ENCODE measurements at regions of chr22 and their contacts with region 1.

Region 1: DNA sequence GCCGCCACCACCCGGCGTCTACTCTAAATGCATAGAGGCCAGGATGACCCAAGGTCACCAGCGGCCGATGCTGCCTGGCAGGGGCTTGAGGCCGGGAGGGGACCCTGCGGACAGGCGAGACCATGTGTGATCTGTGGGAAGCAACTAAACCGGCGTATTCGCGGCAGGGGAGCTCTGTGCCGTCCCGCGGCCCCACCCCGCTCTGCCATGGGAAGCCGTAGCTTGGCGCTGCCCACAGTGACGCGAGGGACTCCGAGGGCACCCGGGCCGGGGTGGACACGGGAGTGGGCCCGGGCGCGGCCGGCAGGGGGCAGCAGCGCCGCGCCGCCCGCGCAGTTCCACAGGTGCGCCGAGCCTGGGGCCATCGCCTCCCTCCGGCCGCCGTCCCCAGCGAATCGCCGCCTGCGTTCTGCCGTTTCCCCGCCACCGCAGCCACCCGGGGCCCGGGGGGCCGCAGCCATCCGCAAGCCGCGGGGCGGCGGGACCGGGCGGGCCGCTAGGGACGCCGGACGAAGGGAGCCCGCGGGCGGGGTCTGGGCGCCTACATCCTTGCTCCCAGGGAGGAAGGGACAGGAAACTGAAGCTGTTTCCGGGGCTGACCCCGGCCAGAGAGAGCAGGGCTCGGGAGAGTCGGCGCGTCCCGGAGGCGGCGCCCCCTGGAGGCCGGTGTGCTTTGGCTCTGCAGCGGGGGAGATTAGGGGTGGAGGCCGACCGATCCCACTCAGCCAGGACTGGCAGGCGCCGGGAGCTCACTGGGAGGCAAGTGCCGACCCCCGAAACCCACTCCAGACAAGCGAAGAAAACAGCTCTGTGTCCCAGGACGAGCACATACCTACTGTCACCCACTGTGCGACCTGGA is 12.5 kb upstream of the HDHD5 start:
- DNase-seq: peak; percentile 96
- ATAC-seq: peak; percentile 94

Region 2: DNA sequence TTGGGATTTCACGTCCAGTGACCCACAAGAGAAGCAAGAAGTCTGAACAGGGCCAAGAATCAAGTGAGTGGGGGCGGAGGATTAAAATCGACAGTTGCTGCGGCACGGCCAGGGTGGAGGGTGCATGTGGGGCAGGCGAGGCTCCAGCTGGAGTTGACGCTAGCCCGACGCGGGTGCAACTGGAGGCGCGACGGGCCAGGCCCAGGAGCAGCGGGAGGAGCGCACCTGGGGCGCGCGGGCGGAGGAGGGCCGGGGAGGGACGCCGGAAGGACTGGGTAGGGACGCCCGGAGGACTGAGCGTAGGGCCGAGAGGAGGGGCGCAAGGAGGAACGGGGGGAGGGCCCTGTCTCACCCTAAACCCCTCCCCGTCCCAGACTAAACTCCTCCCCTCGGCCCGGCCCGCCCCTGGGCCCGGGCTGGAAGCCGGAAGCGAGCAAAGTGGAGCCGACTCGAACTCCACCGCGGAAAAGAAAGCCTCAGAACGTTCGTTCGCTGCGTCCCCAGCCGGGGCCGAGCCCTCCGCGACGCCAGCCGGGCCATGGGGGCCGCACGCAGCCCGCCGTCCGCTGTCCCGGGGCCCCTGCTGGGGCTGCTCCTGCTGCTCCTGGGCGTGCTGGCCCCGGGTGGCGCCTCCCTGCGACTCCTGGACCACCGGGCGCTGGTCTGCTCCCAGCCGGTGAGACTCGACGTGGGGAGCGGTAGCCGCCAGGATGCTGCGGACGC is 86.8 kb before region 1 on chr22 and contains the start of gene IL17RA:
- intact Hi-C with region 1: loop called (anchors 5 kb)
- DNase-seq: peak; percentile 95
- ATAC-seq: peak; percentile 99
- total RNA-seq, gene IL17RA: 10.9 TPM

Region 3: DNA sequence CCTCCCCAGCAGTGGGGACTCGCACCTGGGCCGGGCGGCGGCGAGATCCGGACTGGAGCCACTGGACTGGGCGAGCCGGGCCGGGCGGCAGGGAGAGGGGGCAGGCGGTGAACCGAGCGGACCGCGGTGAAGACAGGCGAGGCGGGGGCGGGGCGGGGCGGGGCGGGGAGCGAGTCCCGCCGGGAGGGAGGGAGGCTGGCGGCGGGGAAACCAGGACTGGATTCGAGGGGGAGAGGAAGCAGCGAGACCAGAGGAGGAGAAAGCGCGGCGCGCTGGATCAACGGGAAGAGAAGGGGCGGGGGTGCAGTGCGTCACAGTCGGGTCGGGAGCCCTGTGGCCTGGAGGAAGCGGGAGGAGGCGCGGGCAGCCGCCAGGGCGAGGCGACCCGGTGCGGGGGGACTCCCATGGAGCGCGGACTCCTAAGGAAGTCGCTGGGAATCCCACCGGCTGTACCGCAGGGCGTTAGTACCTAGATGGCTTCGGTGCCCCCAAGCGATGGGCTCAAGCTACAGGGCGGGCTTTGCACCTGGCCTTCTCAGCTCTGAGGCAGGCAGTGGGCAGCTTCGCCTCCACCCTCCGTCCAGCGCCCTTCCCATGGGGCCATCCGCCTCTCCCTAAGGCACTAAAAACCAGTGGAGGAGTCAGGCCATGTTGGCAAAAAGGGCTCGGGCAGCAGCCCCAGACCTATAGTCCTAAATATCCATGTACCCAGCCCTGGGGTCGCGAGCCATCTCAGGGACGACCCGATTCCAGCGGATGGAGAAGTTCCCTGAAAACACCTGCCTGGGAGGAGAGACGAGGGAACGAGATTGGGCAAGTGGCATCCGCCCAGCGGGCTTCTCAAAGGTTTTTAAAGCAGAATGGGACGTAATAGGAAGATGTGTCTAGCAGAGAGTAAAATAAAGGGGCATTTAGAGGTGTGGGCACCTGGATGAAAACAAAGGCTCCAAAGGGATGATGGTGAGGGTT is 50.0 kb before region 1 on chr22 and contains the start of gene TMEM121B:
- intact Hi-C with region 1: loop called (anchors 1 kb)
- DNase-seq: peak; percentile 91
- ATAC-seq: peak; percentile 79
- total RNA-seq, gene TMEM121B: 2.2 TPM

Region 4: DNA sequence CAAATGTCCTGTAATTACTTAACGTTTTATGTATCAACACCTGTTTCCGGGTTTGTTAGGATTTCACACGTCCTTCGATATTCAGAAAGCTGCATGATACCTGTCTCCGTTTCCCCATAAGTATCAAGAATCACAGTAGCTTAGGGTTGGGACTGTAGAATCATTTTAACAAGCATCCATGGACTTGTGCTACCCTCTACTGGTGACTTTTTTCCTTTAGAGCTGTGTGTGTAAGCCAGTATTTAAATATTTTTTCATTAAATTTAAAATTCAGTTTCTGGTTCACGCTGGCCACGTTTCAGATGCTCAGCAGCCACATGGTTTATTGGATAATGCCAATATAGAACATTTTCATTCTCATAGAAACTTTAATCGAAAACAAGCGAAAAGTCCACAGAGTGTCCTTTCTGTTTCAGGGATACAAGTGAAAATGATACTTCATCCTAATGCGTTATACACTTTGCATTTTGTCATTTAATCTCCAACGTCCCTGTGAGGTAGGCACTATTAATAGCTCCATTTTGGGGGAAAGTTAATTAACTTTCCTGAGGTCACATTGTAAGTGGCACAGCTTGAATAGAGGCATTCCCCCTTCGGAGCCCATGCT is 330.2 kb after region 1 on chr22:
- intact Hi-C with region 1: loop called (anchors 2 kb)
- DNase-seq: no peak
- ATAC-seq: peak; percentile 85

Region 5: DNA sequence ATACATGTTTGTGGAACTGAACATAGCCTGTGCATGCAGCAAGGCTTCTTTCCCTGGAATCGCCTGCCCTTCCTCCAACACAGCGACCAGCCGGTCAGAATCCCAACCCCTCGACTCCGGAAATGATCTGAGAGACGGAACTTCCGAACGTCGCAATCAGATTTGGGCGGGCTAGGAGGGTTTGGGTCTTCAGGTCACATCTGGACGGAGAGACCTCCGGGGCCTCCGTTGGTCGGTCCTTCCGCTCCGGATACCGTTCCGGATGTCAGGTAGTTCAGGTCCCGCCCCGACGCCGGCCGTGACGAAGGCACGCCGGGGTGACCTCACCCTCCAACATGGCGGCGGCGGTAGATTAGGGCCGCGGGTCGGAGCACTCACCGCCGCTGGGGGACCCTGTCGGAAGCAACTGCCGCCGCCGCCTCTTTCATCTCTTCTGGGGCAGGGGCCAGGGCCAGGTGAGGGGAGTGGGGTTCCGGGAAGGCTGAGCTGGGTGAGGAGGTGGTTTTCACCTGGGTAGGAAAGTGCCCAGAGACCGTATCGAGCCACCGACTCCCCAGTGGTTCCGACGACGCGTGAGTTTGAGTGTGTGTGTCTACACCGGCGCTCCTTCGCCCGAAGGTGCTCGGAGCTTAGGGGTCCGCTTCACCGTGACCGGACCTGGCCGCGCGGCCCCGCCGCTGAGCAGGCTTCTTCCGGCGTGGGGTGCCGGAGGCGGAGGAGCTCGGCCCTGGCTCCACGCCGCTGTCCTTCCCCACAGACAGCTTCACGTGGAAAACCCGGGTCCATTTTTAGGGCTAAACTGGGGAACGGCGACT is 467.1 kb after region 1 on chr22 and contains the start of gene BCL2L13:
- intact Hi-C with region 1: loop called (anchors 10 kb)
- DNase-seq: peak; percentile 97
- ATAC-seq: peak; percentile 98
- total RNA-seq, gene BCL2L13: 95.9 TPM

Measured in Right ventricle myocardium inferior (tissue), 1 donor.